Activated CD4-positive, alpha-beta T cell treated with anti-CD3 and anti-CD28 coated beads, Interleukin-2, amount 10 ng/mL, durations not matched to agents 7 days and 5 days (primary cell): ENCODE measurements at regions of chr2 and their contacts with region 1.

Region 1: DNA sequence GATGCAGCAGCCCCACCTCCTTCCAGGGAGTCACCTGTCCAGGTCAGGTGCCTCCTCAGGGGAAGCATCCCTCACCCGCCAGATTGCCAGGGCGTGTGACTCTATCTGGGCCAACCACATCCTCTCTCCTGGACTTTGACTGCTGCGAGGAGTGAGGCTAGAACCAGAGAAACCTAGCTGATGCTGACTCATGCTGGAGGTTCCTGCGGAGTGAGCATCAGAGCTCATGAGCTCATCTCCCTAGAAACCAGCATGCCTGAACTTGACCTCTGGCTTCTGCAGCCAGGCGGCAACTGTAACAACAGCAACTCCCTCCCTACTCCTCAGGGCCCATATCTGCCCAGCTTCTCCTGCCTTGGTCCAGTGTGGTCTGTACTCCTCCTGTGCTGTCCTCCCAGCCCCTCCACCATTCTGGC is 28.3 kb upstream of the NT5DC4 start:
- DNase-seq: peak; percentile 76
- H3K4me3 Mint-ChIP-seq: peak overlapping the region; percentile 2
- H3K27ac Mint-ChIP-seq: peak overlapping the region; percentile 88
- H3K4me1 Mint-ChIP-seq: peaks cover 34% of the 10 kb centered on the region
- H3K27me3 Mint-ChIP-seq: no peaks in the 10 kb centered on the region

Region 2: DNA sequence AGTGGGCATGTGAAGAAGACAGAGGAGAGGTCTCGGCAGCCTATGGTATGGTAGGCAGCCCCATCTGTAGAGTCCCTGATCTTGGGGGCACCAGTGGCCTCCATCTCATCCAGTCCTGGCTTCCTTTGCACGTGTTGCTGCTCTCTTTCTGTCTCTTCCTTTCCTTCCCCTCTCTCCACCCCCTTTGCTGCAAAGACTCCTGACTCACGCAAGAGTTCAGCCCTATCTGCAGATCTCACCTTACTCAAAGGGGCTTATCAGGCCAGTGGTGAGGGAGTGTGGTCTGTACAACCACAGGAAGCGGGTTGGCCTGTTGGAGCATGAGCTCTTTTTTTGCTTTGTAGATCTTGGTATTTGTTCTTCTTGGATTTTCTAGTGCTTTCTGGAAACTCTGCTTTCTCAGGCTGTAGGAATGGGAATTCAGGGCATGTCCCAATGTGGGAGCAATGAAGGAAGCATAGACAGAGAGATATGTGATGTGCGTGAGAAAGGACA is 13.7 kb after region 1 on chr2:
- CTCF ChIA-PET with region 1: interaction called, 27 read pairs
- POLR2A ChIA-PET with region 1: interaction called, 4 read pairs
- DNase-seq: peak; percentile 88
- H3K4me3 Mint-ChIP-seq: peak overlapping the region; percentile 17
- H3K27ac Mint-ChIP-seq: peak overlapping the region; percentile 38
- H3K4me1 Mint-ChIP-seq: peaks cover 52% of the 10 kb centered on the region
- H3K27me3 Mint-ChIP-seq: peaks cover 11% of the 10 kb centered on the region